ENCODE measurements at regions of chr4 and their contacts with region 1.

Region 1: GRCh38 chr4:74531963-74532794 is 87.2 kb downstream of the AREG start:
- DNase-seq: no peak
- H3K4me3 Mint-ChIP-seq: no peak overlapping the region
- H3K27ac Mint-ChIP-seq: no peak overlapping the region
- H3K4me1 Mint-ChIP-seq: no peaks in the 10 kb centered on the region
- H3K27me3 Mint-ChIP-seq: peaks cover under 1% of the 10 kb centered on the region

Region 2: DNA sequence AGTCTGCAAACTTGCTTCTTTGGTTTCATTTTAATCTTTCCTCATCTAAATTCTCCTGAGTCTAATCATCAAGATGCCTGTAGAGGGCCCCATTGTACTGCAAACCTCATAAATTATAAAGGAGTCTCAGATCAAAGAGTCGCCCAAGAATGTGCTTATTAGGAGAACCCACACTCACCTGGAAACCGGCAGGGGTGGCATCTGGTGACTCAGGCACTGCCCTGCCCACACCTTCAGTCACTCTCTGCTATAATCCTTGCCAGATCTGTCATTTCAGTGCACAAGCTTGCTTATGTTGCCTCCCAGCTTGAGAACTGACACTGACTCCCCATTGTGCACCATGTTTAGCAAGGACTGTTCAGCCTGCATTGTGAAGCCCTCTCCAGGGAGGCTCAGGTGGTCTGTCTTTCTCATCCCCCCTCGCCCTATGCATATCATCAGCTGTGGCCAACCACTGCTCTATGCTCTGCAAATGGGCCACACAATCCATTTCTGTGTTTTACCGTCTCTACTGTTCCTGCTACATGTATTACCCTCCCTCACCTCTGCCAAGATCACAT is 211.5 kb before region 1 on chr4:
- intact Hi-C with region 1: loop called (anchors 5 kb)
- DNase-seq: no peak
- H3K4me3 Mint-ChIP-seq: no peak overlapping the region
- H3K27ac Mint-ChIP-seq: no peak overlapping the region
- H3K4me1 Mint-ChIP-seq: no peaks in the 10 kb centered on the region
- H3K27me3 Mint-ChIP-seq: peaks cover 14% of the 10 kb centered on the region

Region 3: DNA sequence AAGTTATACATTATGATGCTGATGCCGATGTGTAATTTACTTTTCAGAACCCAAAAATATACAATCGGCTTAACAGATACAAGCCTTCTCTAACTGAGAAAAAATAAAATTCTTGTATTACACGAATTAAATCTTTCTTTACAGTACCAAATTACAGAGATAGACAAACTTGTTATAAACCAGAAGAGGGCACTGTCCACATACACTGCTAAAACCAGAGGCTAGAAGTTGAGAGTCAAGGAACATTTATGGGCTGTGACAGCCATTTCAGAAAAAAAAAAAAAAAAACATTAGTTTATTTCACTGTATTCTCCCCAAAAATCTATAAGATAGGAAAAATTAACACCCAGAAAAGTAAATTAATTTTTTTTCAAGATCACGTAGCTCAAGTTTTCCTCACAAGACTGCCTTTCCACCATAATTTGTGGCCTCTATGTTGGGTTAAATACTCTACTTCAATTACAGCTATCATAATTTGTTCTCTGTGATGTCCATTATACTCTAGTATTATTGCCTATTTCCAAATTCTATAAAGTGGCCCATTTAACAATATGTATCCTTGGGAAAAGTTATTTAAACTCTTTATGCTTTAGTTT is 155.2 kb before region 1 on chr4:
- intact Hi-C with region 1: loop called (anchors 1 kb)
- DNase-seq: no peak
- H3K4me3 Mint-ChIP-seq: no peak overlapping the region
- H3K27ac Mint-ChIP-seq: no peak overlapping the region
- H3K4me1 Mint-ChIP-seq: peaks cover 5% of the 10 kb centered on the region
- H3K27me3 Mint-ChIP-seq: peaks cover 2% of the 10 kb centered on the region

Region 4: GRCh38 chr4:74733756-74734155 is 201.6 kb after region 1 on chr4:
- intact Hi-C with region 1: no loop called
- DNase-seq: no peak
- H3K4me3 Mint-ChIP-seq: no peak overlapping the region
- H3K27ac Mint-ChIP-seq: no peak overlapping the region
- H3K4me1 Mint-ChIP-seq: no peaks in the 10 kb centered on the region
- H3K27me3 Mint-ChIP-seq: no peaks in the 10 kb centered on the region